ENCODE measurements at regions of chr22 and their contacts with region 1.

Region 1: GRCh38 chr22:35575116-35575748 is 34.6 kb downstream of the RASD2 start:
- DNase-seq: no peak
- H3K4me3 ChIP-seq: no peak overlapping the region
- H3K27ac ChIP-seq: no peak overlapping the region
- H3K4me1 ChIP-seq: no peaks in the 10 kb centered on the region
- H3K27me3 ChIP-seq: no peaks in the 10 kb centered on the region
- CTCF ChIP-seq: no peak
- EP300 ChIP-seq: no peak
- POLR2A ChIP-seq: no peak

Region 2: DNA sequence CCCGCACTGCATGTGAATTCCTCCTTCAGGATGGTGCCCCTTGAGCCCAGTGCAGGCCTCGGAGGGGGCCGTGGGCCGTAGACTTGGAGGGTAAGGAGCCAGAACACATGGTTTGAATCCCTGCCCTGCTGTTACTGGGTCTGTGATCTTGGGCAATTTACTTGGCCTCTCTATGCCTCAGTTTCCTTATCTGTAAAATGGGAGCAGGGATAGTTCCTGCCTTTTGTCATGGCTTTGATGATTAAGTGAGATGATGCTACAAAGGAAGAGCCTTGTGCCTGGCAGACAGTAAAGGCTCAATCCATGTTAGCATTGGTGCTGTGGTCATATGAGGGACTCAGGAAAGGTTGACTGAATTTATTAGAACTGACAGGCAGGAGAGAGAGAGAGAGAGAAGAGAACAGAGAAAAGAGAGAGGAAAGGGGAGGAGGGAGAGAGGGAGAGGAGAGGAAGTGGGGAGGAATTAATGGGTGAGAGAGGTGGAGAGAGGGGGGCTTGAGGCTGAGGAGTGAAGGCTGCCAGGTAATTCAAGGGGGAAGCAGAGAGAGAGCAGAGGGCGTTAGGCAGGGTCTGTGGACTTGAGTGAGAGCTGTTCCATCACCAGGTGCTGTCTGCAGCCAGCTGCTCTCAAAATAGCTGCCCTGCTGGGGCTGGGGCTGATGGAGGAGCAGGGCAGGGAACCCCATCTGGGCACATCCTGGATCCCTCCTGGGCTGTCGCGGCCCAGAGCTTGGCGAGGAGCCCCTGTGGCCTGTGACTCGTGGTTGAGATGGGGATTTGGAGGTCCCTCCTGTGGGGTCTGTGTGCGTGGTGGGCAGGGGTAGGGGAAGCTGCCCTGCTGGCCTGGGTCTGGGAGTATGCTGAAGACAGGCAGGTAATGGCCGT is 131.2 kb before region 1 on chr22:
- intact Hi-C with region 1: loop called in 1 of 4 experiments (anchors 5 kb)
- DNase-seq: no peak
- H3K4me3 ChIP-seq: no peak overlapping the region
- H3K27ac ChIP-seq: no peak overlapping the region
- H3K4me1 ChIP-seq: no peaks in the 10 kb centered on the region
- H3K27me3 ChIP-seq: no peaks in the 10 kb centered on the region
- CTCF ChIP-seq: no peak
- EP300 ChIP-seq: no peak
- POLR2A ChIP-seq: no peak

Region 3: DNA sequence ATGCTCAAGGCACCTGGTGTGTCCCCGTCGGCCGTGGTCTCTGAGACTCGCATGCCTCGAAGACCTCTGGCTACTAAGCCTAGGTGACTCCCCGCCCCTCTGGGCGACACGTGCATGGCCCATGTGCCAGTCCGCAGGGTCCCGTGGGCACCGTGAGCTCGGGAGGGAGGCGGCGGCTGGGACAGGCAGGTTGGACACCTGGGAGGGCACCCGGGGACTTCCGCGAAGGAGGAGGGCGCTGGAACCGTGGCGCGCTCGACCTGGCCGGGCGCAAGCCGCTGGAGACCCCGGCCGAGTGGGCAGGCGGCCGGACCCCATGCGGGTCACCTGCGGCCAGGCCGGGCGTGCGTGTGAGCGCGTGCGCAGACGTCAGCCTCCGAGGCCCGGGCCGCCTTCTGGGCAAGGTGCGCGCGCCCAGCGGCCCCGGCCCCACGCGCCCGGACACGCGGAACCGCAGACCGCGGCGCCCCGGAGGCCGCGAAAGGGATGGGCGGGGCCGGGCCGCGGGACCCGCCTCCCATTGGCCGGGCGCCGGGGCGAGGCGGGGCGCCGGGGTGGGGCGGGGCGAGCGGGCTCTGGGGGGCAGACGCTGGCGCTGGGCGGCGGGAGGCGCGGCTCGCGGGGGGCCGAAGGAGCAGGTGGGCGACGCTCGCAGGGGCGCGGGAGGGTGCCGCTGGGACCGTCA is 35.2 kb before region 1 on chr22:
- intact Hi-C with region 1: no loop called
- DNase-seq: peak; percentile 61 to 83 (median 76)
- H3K4me3 ChIP-seq: peak overlapping the region; percentile 46
- H3K27ac ChIP-seq: peak overlapping the region; percentile 5 to 32
- H3K4me1 ChIP-seq: peaks cover 4% of the 10 kb centered on the region
- H3K27me3 ChIP-seq: no peaks in the 10 kb centered on the region
- CTCF ChIP-seq: no peak
- EP300 ChIP-seq: no peak
- POLR2A ChIP-seq: no peak

Measured in ovary (tissue), 10 donors.